Cardiac septum (tissue), 1 donor: ENCODE measurements at regions of chr1 and their contacts with region 1.

Region 1: GRCh38 chr1:212455803-212456528 is 23.2 kb downstream of the NENF start:
- DNase-seq: peak; percentile 94

Region 2: DNA sequence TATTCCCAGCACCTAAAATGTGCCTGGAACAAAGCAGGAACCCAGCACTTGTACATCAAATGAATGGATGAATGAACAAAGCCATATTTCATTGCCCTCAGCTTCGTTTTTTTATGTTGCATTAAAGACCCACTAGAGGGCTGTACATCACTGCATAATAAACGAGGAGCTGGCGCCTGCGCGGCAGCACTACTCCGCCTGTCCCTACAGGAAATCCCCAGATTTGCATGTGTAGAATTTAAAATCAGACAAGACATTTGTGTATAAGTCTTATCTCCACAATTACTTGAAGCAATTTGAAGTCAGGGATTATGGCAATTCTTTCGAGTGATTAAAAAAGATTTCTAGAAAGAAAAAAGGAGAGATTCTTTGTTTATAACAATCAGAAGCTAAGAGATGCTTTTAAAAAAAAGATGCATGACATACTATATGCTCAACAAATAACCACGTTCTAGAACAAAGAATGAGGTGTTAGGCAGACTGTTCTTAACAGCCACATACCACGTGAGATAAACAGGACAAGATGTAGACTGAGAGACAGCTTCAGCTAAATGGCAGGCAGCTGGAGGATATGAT is 775.1 kb before region 1 on chr1:
- intact Hi-C with region 1: loop called (anchors 10 kb)
- DNase-seq: no peak

Region 3: GRCh38 chr1:211830330-211831142 is 625.4 kb before region 1 on chr1 and contains the start of gene LPGAT1:
- intact Hi-C with region 1: loop called (anchors 10 kb)
- DNase-seq: peak; percentile 95
- total RNA-seq, gene LPGAT1: 43.4 TPM

Region 4: GRCh38 chr1:212062832-212063438 is 393.0 kb before region 1 on chr1:
- intact Hi-C with region 1: loop called (anchors 2 kb)
- DNase-seq: no peak

Region 5: GRCh38 chr1:212234431-212235395 is 221.3 kb before region 1 on chr1:
- intact Hi-C with region 1: loop called (anchors 5 kb)
- DNase-seq: no peak

Region 6: DNA sequence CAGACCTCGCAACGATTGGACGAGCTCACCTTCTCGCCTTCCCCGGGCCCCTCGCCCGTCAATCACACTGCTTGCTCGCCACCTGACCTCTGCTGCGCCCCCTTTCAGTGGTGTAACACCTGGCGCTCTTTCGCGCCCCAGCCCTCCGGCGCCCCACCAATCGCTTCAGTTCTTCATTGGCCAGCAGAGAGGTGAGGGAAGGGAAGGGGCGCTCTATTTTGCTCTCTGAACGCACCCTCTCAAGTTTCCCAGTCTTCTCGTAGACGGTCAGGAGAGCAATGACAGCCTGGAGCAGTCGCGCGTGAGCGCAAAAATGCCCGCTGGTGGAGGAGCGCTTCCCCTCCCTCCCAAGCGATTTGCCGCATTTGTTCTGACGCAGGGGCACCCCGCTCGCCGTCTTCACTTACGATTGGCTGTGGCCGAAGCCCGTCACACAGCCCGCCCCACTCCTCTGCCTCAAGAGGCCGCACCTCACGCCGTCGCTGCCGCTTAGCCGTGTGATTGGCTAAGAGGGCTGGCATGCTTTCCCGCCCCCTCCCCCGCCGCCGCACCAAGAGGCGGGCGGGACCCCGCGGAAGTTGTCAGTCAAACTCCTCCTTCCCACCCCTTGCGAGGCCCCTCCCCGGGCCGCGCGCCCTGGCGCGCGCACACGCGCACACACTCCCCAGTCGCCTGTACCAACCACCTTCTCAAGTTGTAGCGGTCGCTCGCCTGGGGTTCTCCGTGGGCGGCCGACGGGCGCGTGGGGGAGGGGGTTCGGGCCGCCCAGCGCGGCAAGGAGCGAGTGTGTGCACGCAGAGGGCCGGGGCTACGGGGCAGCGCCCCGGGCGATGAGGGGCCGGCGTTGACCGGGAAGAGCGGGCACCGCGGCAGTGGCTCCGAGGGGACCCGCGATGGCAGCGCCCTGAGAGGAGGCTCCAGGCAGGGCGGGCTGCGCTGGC is 171.0 kb before region 1 on chr1 and contains the start of gene PPP2R5A:
- intact Hi-C with region 1: loop called (anchors 5 kb)
- DNase-seq: peak; percentile 100
- total RNA-seq, gene PPP2R5A: 68.1 TPM

Region 7: GRCh38 chr1:212368073-212368484 is 87.9 kb before region 1 on chr1:
- intact Hi-C with region 1: loop called (anchors 5 kb)
- DNase-seq: no peak

Region 8: GRCh38 chr1:212386029-212386428 is 69.9 kb before region 1 on chr1:
- intact Hi-C with region 1: no loop called
- DNase-seq: no peak